AG04449 (cell line): ENCODE measurements at regions of chr20 and their contacts with region 1.

Region 1: GRCh38 chr20:59850018-59850641 is 83.3 kb downstream of the SYCP2 start:
- DNase-seq: no peak
- H3K4me3 ChIP-seq: no peak overlapping the region
- CTCF ChIP-seq: peak; percentile 13

Region 2: DNA sequence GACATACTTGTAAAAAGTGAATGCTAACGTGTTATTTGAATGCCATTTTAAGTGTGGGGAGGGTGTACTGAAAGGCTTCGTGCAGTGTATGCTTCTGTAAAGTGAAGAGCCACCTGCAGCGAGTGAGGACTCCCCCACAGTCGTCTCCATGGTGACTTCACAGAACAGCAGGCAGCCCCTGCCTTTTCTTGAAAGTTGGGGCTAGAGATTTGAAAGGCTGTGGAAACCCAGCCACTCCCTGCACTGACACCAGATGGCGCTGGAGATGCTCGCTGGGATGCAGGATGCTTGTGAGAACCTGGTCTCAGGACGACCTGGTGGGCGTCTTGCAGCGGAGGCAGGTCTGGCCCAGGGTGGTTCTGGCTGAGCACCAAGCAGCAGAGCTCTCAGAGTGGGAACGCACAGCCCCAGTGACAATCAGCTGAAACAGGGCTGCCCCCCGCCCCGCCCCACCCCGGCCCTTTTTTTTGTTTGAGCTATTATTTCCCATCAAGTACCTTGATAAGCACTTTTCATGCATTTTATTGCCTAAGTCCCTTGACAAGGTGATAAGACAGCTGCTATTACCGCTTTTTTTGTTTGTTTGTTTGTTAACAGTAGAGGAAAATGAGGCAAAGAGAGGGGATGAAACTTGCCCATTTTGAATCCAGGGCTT is 67.0 kb before region 1 on chr20:
- CTCF ChIA-PET with region 1: interaction called, 49 read pairs
- POLR2A ChIA-PET with region 1: no interaction called
- DNase-seq: no peak
- H3K4me3 ChIP-seq: no peak overlapping the region
- CTCF ChIP-seq: peak; percentile 91

Region 3: DNA sequence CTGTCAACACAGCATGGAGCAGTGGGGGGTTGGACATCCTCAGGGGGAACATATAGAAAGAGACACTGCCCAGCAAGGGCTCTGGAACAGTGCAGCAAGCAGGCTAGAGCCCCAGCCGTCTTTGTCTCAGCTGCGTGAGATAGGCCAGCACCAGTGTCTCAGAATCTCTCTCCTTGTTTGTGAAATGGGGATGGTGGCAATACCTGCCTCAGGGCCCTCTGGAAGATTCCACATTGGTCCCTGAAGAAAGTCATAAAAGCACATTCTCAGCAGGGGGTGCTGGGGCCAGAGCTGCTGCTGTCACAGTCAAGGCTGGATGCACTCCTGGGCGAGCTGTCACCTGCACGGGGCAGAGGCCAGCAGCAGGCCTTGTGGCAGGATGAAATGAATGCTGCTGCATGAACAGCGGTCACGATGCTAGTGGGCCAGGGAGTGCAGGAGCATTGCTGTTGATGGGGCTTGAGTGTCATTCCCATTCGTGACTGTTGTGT is 38.4 kb before region 1 on chr20:
- CTCF ChIA-PET with region 1: no interaction called
- POLR2A ChIA-PET with region 1: no interaction called
- DNase-seq: no peak
- H3K4me3 ChIP-seq: no peak overlapping the region
- CTCF ChIP-seq: no peak

Region 4: GRCh38 chr20:59835448-59836395 is 14.4 kb before region 1 on chr20:
- CTCF ChIA-PET with region 1: interaction called, 33 read pairs
- POLR2A ChIA-PET with region 1: no interaction called
- DNase-seq: no peak
- H3K4me3 ChIP-seq: no peak overlapping the region; the same call in 1 of the 2 replicates
- CTCF ChIP-seq: no peak

Region 5: DNA sequence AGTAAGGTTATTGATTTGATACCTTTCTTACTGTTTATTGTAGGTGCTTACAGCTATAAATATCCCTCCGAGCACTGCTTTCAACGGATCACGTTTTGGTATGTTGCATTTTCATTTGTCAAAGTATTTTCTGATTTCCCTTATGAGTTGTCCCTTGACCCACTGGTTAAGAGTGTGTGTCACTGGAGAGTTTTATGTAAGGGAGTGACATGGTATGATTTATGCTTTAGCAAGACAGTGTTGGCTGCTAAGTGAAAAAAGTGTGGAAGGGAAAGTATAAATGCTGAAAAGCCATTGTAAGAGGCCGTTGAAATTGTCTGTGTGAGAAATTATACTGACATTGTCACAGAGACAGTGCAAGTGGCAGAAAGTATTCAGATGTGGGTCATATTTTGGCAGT is 11.3 kb after region 1 on chr20:
- CTCF ChIA-PET with region 1: interaction called, 12 read pairs
- POLR2A ChIA-PET with region 1: no interaction called
- DNase-seq: no peak
- H3K4me3 ChIP-seq: no peak overlapping the region
- CTCF ChIP-seq: no peak

Region 6: DNA sequence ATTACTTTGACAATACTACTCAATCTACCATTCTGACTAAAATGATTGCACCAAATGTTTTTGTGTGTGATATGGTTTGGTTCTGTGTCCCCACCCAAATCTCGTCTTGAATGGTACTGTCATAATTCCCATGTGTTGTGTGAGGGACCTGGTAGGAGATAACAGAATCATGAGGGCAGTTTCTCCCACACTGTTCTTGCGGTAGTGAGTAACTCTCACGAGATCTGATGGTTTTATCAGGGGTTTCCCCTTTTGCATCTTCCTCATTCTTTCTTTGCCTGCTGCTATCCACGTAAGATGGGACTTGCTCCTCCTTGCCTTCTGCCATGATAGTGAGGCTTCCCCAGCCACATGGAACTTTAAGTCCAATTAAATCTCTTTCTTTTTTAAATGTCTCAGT is 62.5 kb after region 1 on chr20:
- CTCF ChIA-PET with region 1: no interaction called
- POLR2A ChIA-PET with region 1: no interaction called
- DNase-seq: no peak
- H3K4me3 ChIP-seq: no peak overlapping the region
- CTCF ChIP-seq: no peak